ENCODE measurements at regions of chr1 and their contacts with region 1.

Region 1: GRCh38 chr1:203267347-203267846 is 37.9 kb upstream of the BTG2 start:
- DNase-seq: peak; percentile 90
- ATAC-seq: peak; percentile 70
- H3K4me3 Mint-ChIP-seq: peak overlapping the region; percentile 83
- H3K27ac Mint-ChIP-seq: peak overlapping the region; percentile 81
- H3K4me1 Mint-ChIP-seq: peaks cover 22% of the 10 kb centered on the region
- H3K27me3 Mint-ChIP-seq: peaks cover 6% of the 10 kb centered on the region

Region 2: DNA sequence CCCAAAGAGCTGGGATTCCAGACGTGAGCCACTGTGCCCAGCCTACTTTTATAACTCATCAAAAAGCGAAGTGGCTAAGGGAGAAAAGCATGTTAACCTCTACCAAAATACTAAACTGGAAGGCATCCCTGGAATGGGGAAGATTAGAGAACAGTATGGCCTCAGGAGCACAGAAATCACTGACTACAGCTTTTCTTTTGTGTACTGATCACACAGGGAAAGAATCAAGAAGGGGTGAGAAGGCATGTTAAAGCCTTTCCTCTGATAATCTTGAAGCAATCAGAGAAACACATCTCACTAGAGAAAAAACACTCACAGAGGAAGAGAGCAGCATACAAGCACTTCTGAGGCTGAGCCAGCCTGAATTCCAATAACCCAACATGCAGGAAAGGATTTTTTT is 445.9 kb before region 1 on chr1:
- CTCF ChIA-PET with region 1: no interaction called
- DNase-seq: no peak
- ATAC-seq: no peak
- H3K4me3 Mint-ChIP-seq: no peak overlapping the region
- H3K27ac Mint-ChIP-seq: no peak overlapping the region
- H3K4me1 Mint-ChIP-seq: peaks cover 2% of the 10 kb centered on the region
- H3K27me3 Mint-ChIP-seq: peaks cover 40% of the 10 kb centered on the region

Region 3: GRCh38 chr1:203038891-203039608 is 228.3 kb before region 1 on chr1:
- CTCF ChIA-PET with region 1: interaction called, 41 read pairs
- DNase-seq: peak; percentile 72
- ATAC-seq: peak; percentile 82
- H3K4me3 Mint-ChIP-seq: no peak overlapping the region
- H3K27ac Mint-ChIP-seq: no peak overlapping the region
- H3K4me1 Mint-ChIP-seq: peaks cover 13% of the 10 kb centered on the region
- H3K27me3 Mint-ChIP-seq: no peaks in the 10 kb centered on the region

Region 4: GRCh38 chr1:203186446-203187303 is 80.7 kb before region 1 on chr1 and contains the start of gene CHI3L1:
- CTCF ChIA-PET with region 1: no interaction called
- DNase-seq: no peak
- ATAC-seq: no peak
- H3K4me3 Mint-ChIP-seq: no peak within 1 kb of the TSS
- H3K27ac Mint-ChIP-seq: no peak within 1 kb of the TSS
- H3K4me1 Mint-ChIP-seq: no peaks in the 10 kb centered on the region
- H3K27me3 Mint-ChIP-seq: peaks cover 27% of the 10 kb centered on the region
- total RNA-seq, gene CHI3L1: not detected

Region 5: DNA sequence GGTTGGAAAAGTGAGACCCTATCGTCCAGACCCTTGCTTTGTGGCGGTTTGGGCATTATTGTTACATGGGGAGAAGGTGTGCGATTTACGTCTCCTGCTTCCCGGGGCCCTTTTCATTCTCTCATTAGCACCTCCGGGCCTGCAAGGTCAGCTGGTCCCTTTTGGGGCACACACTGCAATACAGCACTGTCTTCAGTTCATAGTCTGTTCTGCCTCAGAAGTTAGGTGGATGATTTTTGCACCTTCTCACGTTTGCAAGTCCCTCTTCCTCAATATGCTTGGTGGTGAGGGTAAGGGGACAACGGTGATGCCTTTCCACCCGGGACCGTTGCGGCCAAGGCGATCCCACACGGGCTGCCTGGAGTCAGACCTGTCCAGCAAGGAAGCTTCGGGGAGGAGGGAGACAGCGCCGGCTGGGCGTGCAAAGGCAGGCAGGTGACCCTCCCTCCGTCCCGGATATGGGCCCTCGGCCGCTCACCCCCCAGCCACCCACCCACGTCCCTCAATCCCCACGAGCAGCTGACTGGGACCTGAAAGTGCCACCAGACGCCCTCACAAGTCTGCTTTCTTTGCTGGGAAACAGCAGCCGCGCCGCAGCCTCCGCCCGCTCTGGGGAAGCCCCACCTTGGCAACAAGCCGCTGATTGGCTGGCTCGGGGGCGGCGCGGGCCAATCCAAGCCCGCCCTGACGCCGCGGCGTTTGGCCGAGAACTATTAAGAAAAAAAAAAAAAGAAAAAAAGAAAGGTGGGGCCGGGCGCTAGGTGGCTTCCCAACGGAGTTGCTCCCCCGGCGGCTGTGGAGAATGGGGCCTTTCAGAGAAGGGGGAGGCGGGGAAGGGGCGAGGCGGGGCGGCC is 59.7 kb after region 1 on chr1:
- CTCF ChIA-PET with region 1: interaction called, 806 read pairs
- DNase-seq: peak; percentile 96
- ATAC-seq: peak; percentile 91
- H3K4me3 Mint-ChIP-seq: peak overlapping the region; percentile 71
- H3K27ac Mint-ChIP-seq: peak overlapping the region; percentile 91
- H3K4me1 Mint-ChIP-seq: peaks cover 66% of the 10 kb centered on the region
- H3K27me3 Mint-ChIP-seq: no peaks in the 10 kb centered on the region

Region 6: DNA sequence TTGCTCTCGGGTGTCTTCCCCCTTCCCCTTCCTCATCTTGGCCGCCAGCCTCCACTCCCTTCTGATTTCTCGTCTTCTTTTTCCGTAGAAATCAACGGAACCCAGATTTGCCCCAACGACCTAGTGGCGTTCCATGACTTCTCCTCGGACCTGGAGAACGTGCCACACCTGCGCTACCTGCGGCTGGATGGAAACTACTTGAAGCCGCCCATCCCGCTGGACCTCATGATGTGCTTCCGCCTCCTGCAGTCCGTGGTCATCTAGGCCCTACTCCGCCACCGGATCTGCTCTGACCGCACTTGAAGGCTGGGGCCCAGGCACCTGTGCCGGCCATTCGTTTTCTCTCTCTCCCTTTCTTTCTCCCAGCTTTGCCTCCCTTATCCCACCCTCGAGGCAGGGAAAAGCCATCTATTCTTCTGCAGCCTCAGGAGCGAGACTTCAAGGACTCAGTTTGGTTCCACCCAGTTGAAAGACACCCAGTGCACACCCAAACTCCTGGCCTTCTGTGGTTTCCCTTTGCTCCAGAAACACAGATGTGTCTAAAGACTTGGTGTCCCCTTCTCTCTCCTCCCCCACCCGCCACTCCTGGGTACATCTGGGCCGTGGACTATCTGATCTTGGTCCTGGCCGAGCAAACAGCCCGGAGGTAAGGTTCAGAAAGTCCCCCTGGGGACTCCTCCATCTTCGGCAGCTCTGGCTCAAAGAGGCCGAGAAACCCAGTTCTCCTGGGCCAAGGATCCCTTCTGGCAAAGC is 219.4 kb after region 1 on chr1:
- CTCF ChIA-PET with region 1: interaction called, 194 read pairs
- DNase-seq: no peak
- ATAC-seq: no peak
- H3K4me3 Mint-ChIP-seq: no peak overlapping the region
- H3K27ac Mint-ChIP-seq: no peak overlapping the region
- H3K4me1 Mint-ChIP-seq: peaks cover 4% of the 10 kb centered on the region
- H3K27me3 Mint-ChIP-seq: peaks cover under 1% of the 10 kb centered on the region

Region 7: GRCh38 chr1:203504397-203505250 is 237.2 kb after region 1 on chr1:
- CTCF ChIA-PET with region 1: interaction called, 10 read pairs
- DNase-seq: peak; percentile 84
- ATAC-seq: peak; percentile 85
- H3K4me3 Mint-ChIP-seq: no peak overlapping the region
- H3K27ac Mint-ChIP-seq: no peak overlapping the region
- H3K4me1 Mint-ChIP-seq: peaks cover 6% of the 10 kb centered on the region
- H3K27me3 Mint-ChIP-seq: peaks cover 14% of the 10 kb centered on the region

Region 8: DNA sequence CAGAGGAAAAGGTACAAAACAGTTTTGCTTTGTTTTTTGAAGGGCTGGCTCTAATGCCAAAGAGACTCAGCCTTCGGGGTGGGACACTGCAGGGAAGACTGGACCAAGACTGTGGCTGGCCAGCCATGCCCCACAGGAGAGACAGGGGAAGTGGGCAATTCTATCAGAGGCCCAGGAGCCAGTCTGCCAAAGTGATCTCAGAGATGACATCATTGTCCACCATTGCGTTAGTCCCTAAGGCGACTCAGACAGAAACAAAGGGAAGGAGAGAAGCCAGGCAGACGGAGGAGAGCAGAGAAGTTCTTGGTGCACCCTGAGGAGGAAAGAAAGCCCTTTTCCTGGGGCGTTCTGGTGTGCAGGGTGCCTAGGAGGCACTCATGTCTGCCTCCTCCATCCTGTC is 252.9 kb after region 1 on chr1:
- CTCF ChIA-PET with region 1: no interaction called
- DNase-seq: no peak
- ATAC-seq: no peak
- H3K4me3 Mint-ChIP-seq: no peak overlapping the region
- H3K27ac Mint-ChIP-seq: no peak overlapping the region
- H3K4me1 Mint-ChIP-seq: no peaks in the 10 kb centered on the region
- H3K27me3 Mint-ChIP-seq: no peaks in the 10 kb centered on the region

Measured in activated CD8-positive, alpha-beta memory T cell treated with anti-CD3 and anti-CD28 coated beads, Interleukin-2, amount 10 ng/mL, durations not matched to agents 7 days and 5 days (primary cell).